AG04449 (cell line): ENCODE measurements at regions of chr1 and their contacts with region 1.

Region 1: DNA sequence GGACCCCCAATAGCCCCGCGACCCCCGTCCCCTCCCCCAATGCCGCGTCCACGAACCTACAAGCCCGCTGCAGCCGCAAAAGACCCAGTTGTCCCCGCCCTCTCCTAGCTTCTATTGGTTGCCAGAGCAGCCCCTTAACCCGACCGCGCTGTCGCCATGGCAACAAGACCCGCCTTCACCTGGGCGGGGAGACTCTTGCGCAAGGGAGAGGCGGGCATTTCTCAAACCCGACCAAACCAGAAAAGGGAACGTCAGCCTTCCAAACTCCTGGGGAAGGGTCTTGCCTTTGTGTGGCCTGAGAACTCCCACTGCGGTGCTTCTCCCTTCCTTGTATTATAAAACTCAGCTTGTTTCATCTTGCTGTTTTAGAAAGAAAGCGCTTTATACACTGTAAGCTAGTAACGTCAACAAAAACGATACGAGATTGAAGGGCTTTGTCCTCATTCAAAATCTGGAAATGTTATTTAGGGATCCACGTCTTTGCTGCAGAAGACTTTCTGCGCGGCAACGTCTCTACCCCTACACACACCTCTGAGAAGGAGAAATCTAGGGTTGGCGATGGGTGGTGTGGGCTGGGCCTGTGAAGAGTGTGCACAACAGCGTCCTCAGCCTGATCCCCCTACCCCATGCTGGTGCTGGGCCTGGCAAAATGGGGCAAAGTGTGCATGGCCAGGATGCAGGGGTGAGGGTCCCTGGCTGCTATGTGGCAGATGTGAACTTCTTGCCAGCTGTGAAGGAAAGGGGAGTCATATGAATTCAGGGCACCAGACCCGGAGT is at the start of gene TMEM9:
- DNase-seq: peak; percentile 58
- H3K4me3 ChIP-seq: peak within 1 kb of the TSS; percentile 80
- CTCF ChIP-seq: no peak

Region 2: GRCh38 chr1:201114236-201115131 is 40.1 kb before region 1 on chr1:
- CTCF ChIA-PET with region 1: no interaction called
- POLR2A ChIA-PET with region 1: no interaction called
- DNase-seq: no peak
- H3K4me3 ChIP-seq: peak overlapping the region; percentile 67
- CTCF ChIP-seq: peak; percentile 94

Region 3: GRCh38 chr1:201137579-201138310 is 16.8 kb before region 1 on chr1:
- CTCF ChIA-PET with region 1: interaction called, 65 read pairs
- POLR2A ChIA-PET with region 1: interaction called, 7 read pairs
- DNase-seq: peak; percentile 81
- H3K4me3 ChIP-seq: no peak overlapping the region
- CTCF ChIP-seq: no peak

Region 4: DNA sequence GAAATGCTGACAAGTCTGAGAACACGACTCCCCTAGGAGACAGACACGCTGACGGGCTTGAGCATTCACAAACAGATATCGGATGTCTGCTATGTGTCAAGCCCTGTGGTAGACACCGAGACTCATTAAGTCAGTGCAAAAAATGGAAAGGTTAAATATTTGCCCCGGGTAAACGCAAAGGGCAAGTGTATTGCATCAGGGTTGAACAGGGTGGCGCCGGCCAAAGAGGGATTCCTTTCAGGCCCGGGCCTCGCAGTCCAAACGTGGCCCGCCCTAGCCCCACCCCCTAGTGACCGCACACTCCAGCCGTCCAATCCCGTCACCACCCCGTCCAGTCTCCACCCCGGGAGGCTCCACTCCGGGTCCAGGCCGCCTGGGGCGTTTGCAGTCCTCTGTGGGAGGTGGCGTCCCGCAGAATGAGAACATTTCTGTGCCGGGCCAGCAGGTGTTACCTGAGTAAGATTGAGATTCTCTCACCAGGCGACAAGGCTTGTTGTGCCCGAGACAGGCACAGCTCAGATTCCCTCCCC is 16.0 kb after region 1 on chr1:
- CTCF ChIA-PET with region 1: interaction called, 68 read pairs
- POLR2A ChIA-PET with region 1: interaction called, 3 read pairs
- DNase-seq: peak; percentile 21
- H3K4me3 ChIP-seq: peak overlapping the region; percentile 67
- CTCF ChIP-seq: no peak